ENCODE measurements at regions of chr10 and their contacts with region 1.

Region 1: DNA sequence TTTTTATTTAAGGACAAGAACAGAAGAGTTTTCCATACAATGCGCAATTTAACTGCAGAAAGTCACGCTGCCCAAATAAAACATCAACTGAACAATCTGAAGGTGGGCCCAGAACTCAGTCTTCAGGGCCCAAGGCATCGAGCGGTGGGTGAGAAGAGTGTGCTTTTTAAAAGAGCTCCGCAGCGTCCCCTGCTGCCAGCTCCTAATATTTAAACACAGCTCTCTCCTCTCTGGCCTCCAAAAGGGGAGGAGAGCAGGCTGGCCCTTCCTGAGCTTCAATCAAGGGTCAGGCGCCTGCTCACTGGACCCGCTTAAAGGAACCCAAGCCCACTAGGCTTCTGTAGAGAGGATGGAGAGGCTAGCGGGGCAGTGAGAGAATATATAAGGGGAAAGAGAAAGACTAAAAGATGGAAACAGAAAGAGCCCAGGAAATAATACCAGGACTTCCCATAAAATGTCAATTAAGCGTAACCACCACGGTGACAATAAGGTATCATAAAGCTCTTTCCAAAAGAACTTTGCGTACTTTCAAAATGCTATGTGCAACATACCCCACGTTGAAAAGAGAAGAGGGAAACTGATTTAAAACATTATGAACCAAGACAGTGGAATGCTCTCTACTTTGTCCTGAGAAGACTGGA is 2.8 kb downstream of the FAM53B start:
- DNase-seq: peak; percentile 50
- ATAC-seq: peak; percentile 60
- H3K4me3 ChIP-seq: no peak overlapping the region
- H3K27ac ChIP-seq: no peak overlapping the region
- H3K4me1 ChIP-seq: peaks cover 29 to 51% of the 10 kb centered on the region in 2 experiments
- H3K27me3 ChIP-seq: no peaks in the 10 kb centered on the region
- CTCF ChIP-seq: peak; percentile 76 to 92 (median 89)
- POLR2A ChIP-seq: no peak
- RAD21 ChIP-seq: peak; percentile 88

Region 2: GRCh38 chr10:124418726-124419501 is 322.5 kb before region 1 on chr10 and contains the start of gene OAT:
- CTCF ChIA-PET with region 1: no interaction called
- POLR2A ChIA-PET with region 1: no interaction called
- RAD21 ChIA-PET with region 1: no interaction called
- intact Hi-C with region 1: loop called (anchors 5 kb)
- DNase-seq: peak; percentile 96
- ATAC-seq: peak; percentile 94
- H3K4me3 ChIP-seq: peak within 1 kb of the TSS; percentile 54 to 74
- H3K27ac ChIP-seq: peak within 1 kb of the TSS; percentile 37
- H3K4me1 ChIP-seq: peaks cover 10 to 15% of the 10 kb centered on the region in 2 experiments
- H3K27me3 ChIP-seq: no peaks in the 10 kb centered on the region
- CTCF ChIP-seq: peak in 1 of 3 experiments; percentile 45; a peak in 3 of 6 replicates
- POLR2A ChIP-seq: peak; percentile 99
- RAD21 ChIP-seq: no peak
- total RNA-seq, gene OAT: 133 TPM

Region 3: DNA sequence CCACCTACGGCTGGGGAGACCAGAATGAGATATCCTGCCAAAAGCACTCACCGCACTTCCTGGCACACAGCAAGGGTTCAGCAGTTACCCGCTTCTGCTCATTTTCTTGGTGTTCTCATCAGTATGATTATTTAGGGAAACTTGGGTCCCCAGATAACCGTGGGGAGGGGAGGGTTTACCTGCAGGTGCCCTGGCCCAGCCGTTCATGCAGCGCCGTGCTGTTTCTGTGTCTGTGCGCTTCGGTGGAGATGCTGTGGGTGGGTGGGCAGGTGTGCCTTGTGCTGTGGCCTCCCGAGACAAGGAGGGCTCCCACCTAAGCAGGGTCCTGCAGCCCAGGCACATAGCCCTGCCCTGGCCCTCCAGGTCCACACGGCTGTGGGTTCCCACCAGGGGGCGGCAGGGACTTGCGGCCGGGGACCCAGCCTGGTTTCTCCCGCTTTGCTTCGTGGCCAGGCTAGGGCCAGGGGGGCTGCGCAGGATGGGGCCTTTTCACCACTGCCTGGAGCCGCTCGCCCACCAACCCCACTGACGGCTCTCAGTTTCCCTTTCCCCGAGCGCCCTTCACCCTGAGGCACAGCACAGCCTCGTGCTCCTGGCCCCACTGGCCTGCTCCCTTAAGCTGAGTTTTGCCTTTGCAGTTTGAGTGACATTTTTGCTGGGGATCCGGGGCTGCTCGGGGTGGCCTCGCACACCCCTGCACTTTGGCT is 201.3 kb before region 1 on chr10:
- CTCF ChIA-PET with region 1: interaction called, 14 read pairs
- POLR2A ChIA-PET with region 1: no interaction called
- RAD21 ChIA-PET with region 1: interaction called in 1 of 2 experiments, 3 read pairs
- intact Hi-C with region 1: no loop called
- DNase-seq: no peak
- ATAC-seq: peak; percentile 83
- H3K4me3 ChIP-seq: no peak overlapping the region
- H3K27ac ChIP-seq: no peak overlapping the region
- H3K4me1 ChIP-seq: no peaks in the 10 kb centered on the region
- H3K27me3 ChIP-seq: no peaks in the 10 kb centered on the region
- CTCF ChIP-seq: peak; percentile 53 to 78 (median 60)
- POLR2A ChIP-seq: no peak
- RAD21 ChIP-seq: peak; percentile 86

Region 4: GRCh38 chr10:124647421-124648130 is 93.8 kb before region 1 on chr10:
- CTCF ChIA-PET with region 1: interaction called, 5 read pairs
- POLR2A ChIA-PET with region 1: no interaction called
- RAD21 ChIA-PET with region 1: no interaction called
- intact Hi-C with region 1: loop called (anchors 5 kb)
- DNase-seq: peak; percentile 15
- ATAC-seq: peak; percentile 88
- H3K4me3 ChIP-seq: no peak overlapping the region; a peak in 1 of 4 replicates
- H3K27ac ChIP-seq: peak overlapping the region; percentile 2; the same call in 1 of the 2 replicates
- H3K4me1 ChIP-seq: peaks cover 6 to 20% of the 10 kb centered on the region in 2 experiments; a peak in 3 of 4 replicates
- H3K27me3 ChIP-seq: no peaks in the 10 kb centered on the region
- CTCF ChIP-seq: peak in 2 of 3 experiments; percentile 23 to 40; a peak in 1 of 6 replicates
- POLR2A ChIP-seq: no peak
- RAD21 ChIP-seq: no peak

Region 5: GRCh38 chr10:124677749-124678556 is 63.4 kb before region 1 on chr10:
- CTCF ChIA-PET with region 1: no interaction called
- POLR2A ChIA-PET with region 1: no interaction called
- RAD21 ChIA-PET with region 1: no interaction called
- intact Hi-C with region 1: no loop called
- DNase-seq: no peak
- ATAC-seq: no peak
- H3K4me3 ChIP-seq: no peak overlapping the region
- H3K27ac ChIP-seq: no peak overlapping the region
- H3K4me1 ChIP-seq: no peaks in the 10 kb centered on the region
- H3K27me3 ChIP-seq: no peaks in the 10 kb centered on the region
- CTCF ChIP-seq: no peak
- POLR2A ChIP-seq: no peak
- RAD21 ChIP-seq: no peak

Region 6: GRCh38 chr10:124724279-124725027 is 16.9 kb before region 1 on chr10:
- CTCF ChIA-PET with region 1: interaction called, 25 read pairs
- POLR2A ChIA-PET with region 1: interaction called, 3 read pairs
- RAD21 ChIA-PET with region 1: no interaction called
- intact Hi-C with region 1: no loop called
- DNase-seq: no peak
- ATAC-seq: peak; percentile 41
- H3K4me3 ChIP-seq: no peak overlapping the region
- H3K27ac ChIP-seq: no peak overlapping the region
- H3K4me1 ChIP-seq: peaks cover 0 to 18% of the 10 kb centered on the region in 2 experiments; a peak in 1 of 4 replicates
- H3K27me3 ChIP-seq: no peaks in the 10 kb centered on the region
- CTCF ChIP-seq: no peak
- POLR2A ChIP-seq: no peak
- RAD21 ChIP-seq: no peak

Region 7: GRCh38 chr10:124820121-124820520 is 78.7 kb after region 1 on chr10:
- CTCF ChIA-PET with region 1: no interaction called
- POLR2A ChIA-PET with region 1: no interaction called
- RAD21 ChIA-PET with region 1: no interaction called
- intact Hi-C with region 1: no loop called
- DNase-seq: no peak
- ATAC-seq: no peak
- H3K4me3 ChIP-seq: no peak overlapping the region
- H3K27ac ChIP-seq: no peak overlapping the region
- H3K4me1 ChIP-seq: no peaks in the 10 kb centered on the region
- H3K27me3 ChIP-seq: no peaks in the 10 kb centered on the region
- CTCF ChIP-seq: no peak
- POLR2A ChIP-seq: no peak
- RAD21 ChIP-seq: no peak

Region 8: GRCh38 chr10:125048101-125048864 is 306.9 kb after region 1 on chr10:
- CTCF ChIA-PET with region 1: no interaction called
- POLR2A ChIA-PET with region 1: no interaction called
- RAD21 ChIA-PET with region 1: no interaction called
- intact Hi-C with region 1: no loop called
- DNase-seq: peak; percentile 88
- ATAC-seq: peak; percentile 87
- H3K4me3 ChIP-seq: no peak overlapping the region
- H3K27ac ChIP-seq: 0 out of 2 replicates have a peak overlapping the region, but pooled peaks have one; percentile 10
- H3K4me1 ChIP-seq: peaks cover 40 to 48% of the 10 kb centered on the region in 2 experiments
- H3K27me3 ChIP-seq: no peaks in the 10 kb centered on the region
- CTCF ChIP-seq: peak in 2 of 3 experiments; percentile 100; a peak in 4 of 6 replicates
- POLR2A ChIP-seq: no peak
- RAD21 ChIP-seq: no peak

Measured in HCT116 (cell line).